SK-N-SH (cell line): ENCODE measurements at regions of chr4 and their contacts with region 1.

Region 1: DNA sequence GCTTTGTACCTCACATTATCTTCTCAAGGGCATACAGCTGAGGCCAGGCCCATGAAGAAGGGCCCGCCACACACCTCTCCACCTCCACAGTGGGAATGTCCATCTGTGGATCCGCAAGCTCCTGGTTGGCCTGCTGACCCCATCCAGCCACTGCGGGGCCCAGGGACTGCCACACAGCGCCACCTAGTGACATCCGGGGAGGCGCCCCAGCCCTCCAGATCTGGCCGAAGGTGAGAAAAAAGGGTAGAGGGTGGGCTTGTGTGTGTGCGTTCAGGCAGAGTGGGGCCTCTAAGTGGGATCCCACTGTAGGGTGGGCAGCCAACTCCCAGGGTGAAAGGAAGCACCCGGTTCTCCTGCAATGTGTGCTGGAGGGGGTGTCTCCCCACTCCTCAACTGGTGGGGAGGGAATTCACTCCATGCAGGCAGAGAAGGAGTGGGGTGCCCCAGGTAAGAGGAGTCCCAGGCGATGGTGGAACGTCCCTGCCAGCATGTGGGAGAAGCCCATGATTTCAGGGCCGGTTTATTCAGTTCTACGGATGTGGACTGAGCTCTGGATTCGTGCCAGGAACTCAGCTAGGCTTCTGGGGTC is 117.3 kb downstream of the ENPP6 start:
- DNase-seq: peak; percentile 93
- H3K4me3 ChIP-seq: no peak overlapping the region
- H3K27ac ChIP-seq: peak overlapping the region in 1 of 2 experiments; percentile 54; a peak in 2 of 4 replicates
- H3K4me1 ChIP-seq: peaks cover 0 to 60% of the 10 kb centered on the region in 2 experiments; a peak in 1 of 4 replicates
- H3K27me3 ChIP-seq: no peaks in the 10 kb centered on the region
- CTCF ChIP-seq: peak; percentile 83
- EP300 ChIP-seq: 0 out of 4 replicates have a peak, but pooled peaks of 1 of the 2 experiments have one; percentile 11
- RAD21 ChIP-seq: peak; percentile 96

Region 2: DNA sequence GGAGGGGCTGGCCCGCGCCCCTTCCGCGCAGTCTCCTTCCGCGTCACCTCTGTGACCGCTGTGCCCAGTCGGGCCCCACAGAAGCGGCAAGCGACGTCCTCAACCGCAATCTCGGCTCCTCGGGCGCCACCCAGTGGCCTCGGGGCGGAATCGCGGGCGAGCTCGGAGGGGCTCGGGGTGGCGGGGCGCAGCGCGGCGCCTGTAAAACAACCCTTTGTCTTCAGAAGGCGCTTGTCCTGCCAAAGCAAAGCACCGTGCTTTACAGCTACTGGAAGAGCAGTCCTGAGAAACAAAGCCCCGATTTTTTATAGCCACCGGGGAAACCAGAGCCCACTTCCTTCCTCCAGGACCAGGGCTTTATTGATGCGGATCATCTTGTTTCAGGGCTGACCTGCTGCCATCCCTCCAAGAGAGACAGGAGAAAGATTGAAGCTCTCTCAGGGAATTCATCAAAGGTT is 693.2 kb before region 1 on chr4:
- CTCF ChIA-PET with region 1: no interaction called
- POLR2A ChIA-PET with region 1: no interaction called
- DNase-seq: peak; percentile 92
- H3K4me3 ChIP-seq: peak overlapping the region; percentile 52 to 74
- H3K27ac ChIP-seq: peak overlapping the region; percentile 70 to 86
- H3K4me1 ChIP-seq: peaks cover 0 to 13% of the 10 kb centered on the region in 2 experiments; a peak in 1 of 4 replicates
- H3K27me3 ChIP-seq: no peaks in the 10 kb centered on the region
- CTCF ChIP-seq: peak; percentile 93
- EP300 ChIP-seq: no peak
- RAD21 ChIP-seq: peak; percentile 78

Region 3: DNA sequence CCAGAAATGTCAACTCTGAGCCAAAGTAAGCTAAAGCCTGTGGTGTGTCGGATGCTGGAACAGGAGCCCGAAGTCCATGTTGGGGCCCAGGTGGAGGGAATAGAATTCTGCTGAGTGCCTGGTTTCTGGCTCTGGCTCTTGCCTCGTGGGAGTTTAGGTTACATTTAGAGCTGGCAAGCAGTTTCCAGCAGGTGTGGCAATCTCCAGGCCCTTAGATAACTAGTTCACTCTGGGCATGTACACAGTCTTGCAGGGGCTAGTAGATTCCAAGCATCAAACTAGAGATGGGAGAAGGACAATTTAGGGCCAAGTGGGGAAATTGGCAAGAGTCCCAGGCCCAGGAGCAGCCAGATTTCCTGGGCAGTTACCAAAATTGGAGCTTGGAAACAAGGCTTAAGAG is 251.6 kb before region 1 on chr4:
- CTCF ChIA-PET with region 1: interaction called, 128 read pairs
- POLR2A ChIA-PET with region 1: no interaction called
- DNase-seq: no peak
- H3K4me3 ChIP-seq: no peak overlapping the region
- H3K27ac ChIP-seq: no peak overlapping the region; a peak in 1 of 4 replicates
- H3K4me1 ChIP-seq: peaks cover 0 to 6% of the 10 kb centered on the region in 2 experiments; a peak in 1 of 4 replicates
- H3K27me3 ChIP-seq: no peaks in the 10 kb centered on the region
- CTCF ChIP-seq: no peak
- EP300 ChIP-seq: no peak
- RAD21 ChIP-seq: no peak

Region 4: GRCh38 chr4:183905081-183905592 is 195.3 kb before region 1 on chr4 and contains the start of gene STOX2:
- CTCF ChIA-PET with region 1: interaction called, 64 read pairs
- POLR2A ChIA-PET with region 1: interaction called, 19 read pairs
- DNase-seq: peak; percentile 93
- H3K4me3 ChIP-seq: peak within 1 kb of the TSS; percentile 58 to 62
- H3K27ac ChIP-seq: peak within 1 kb of the TSS in 1 of 2 experiments; percentile 95; a peak in 2 of 4 replicates
- H3K4me1 ChIP-seq: peaks cover 0 to 3% of the 10 kb centered on the region in 2 experiments; a peak in 2 of 4 replicates
- H3K27me3 ChIP-seq: peaks cover 46% of the 10 kb centered on the region
- CTCF ChIP-seq: no peak
- EP300 ChIP-seq: 0 out of 4 replicates have a peak, but pooled peaks of 1 of the 2 experiments have one; percentile 39
- RAD21 ChIP-seq: peak; percentile 17; the same call in 1 of the 2 replicates
- polyA plus RNA-seq, gene STOX2: 0.16 and 0.49 TPM in 2 replicates

Region 5: GRCh38 chr4:184080674-184081073 is 19.7 kb before region 1 on chr4:
- CTCF ChIA-PET with region 1: interaction called, 17 read pairs
- POLR2A ChIA-PET with region 1: no interaction called
- DNase-seq: no peak
- H3K4me3 ChIP-seq: no peak overlapping the region
- H3K27ac ChIP-seq: no peak overlapping the region
- H3K4me1 ChIP-seq: no peaks in the 10 kb centered on the region
- H3K27me3 ChIP-seq: no peaks in the 10 kb centered on the region
- CTCF ChIP-seq: no peak
- EP300 ChIP-seq: no peak
- RAD21 ChIP-seq: no peak

Region 6: DNA sequence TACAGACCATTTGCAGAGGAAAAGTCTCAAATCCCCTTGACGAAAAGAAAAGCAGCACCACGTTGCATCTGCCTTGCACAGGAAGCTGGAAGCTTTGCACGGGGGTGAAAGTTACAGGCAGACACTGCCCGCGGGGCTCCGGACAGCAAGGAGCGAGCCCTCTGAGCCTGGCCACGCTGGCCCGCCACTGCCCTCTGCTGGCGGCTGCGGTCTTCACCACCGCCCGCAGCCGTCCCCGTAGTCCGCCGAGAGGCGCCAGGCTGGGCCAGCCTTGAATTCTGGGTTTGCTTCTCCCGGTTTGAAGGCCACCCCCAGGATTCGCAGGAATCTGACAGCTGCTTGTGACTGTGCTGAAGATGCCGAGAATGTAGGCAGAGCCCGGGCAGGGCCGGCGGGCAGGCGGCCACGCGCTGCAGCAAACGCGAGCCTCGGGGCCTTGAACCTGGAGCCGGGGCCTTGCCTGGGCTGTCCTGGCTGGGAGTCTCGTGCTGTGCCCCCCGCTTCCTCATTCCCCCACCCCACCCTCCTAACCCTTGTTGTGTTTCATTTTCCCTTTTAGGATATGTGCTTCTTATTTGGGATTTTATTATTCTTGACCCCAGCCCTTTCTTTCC is 68.1 kb after region 1 on chr4:
- CTCF ChIA-PET with region 1: interaction called, 158 read pairs
- POLR2A ChIA-PET with region 1: no interaction called
- DNase-seq: peak; percentile 93
- H3K4me3 ChIP-seq: peak overlapping the region in 1 of 2 experiments; percentile 13; a peak in 1 of 4 replicates
- H3K27ac ChIP-seq: no peak overlapping the region
- H3K4me1 ChIP-seq: peaks cover 0 to 5% of the 10 kb centered on the region in 2 experiments; a peak in 1 of 4 replicates
- H3K27me3 ChIP-seq: no peaks in the 10 kb centered on the region
- CTCF ChIP-seq: peak; percentile 86
- EP300 ChIP-seq: no peak
- RAD21 ChIP-seq: peak; percentile 84

Region 7: DNA sequence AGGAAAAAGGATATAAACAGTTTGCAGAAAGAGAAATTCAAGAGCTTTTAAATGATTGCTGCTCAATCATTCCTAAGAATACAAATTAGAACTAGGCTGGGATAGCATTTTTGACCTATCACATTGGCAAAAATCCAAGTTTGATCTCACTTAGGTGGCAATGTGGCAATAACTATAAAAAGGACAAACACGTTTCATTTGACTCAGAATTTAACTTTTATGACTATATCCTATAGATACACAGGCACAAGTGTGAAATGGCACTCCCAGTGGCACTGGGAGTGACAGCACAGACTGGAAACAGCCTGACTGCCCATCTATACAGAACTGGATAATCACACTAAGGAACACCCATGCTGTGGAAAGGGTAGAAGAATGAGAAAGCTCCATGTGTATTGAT is 622.4 kb after region 1 on chr4:
- CTCF ChIA-PET with region 1: no interaction called
- POLR2A ChIA-PET with region 1: no interaction called
- DNase-seq: no peak
- H3K4me3 ChIP-seq: no peak overlapping the region
- H3K27ac ChIP-seq: no peak overlapping the region
- H3K4me1 ChIP-seq: no peaks in the 10 kb centered on the region
- H3K27me3 ChIP-seq: no peaks in the 10 kb centered on the region
- CTCF ChIP-seq: no peak
- EP300 ChIP-seq: no peak
- RAD21 ChIP-seq: no peak

Region 8: GRCh38 chr4:185346975-185347601 is 1246.7 kb after region 1 on chr4:
- CTCF ChIA-PET with region 1: no interaction called
- POLR2A ChIA-PET with region 1: no interaction called
- DNase-seq: no peak
- H3K4me3 ChIP-seq: no peak overlapping the region
- H3K27ac ChIP-seq: peak overlapping the region in 1 of 2 experiments; percentile 89; a peak in 2 of 4 replicates
- H3K4me1 ChIP-seq: peaks cover 10 to 13% of the 10 kb centered on the region in 2 experiments
- H3K27me3 ChIP-seq: no peaks in the 10 kb centered on the region
- CTCF ChIP-seq: no peak
- EP300 ChIP-seq: no peak
- RAD21 ChIP-seq: no peak